Brain microvascular endothelial cell (primary cell): ENCODE measurements at regions of chr14 and their contacts with region 1.

Region 1: GRCh38 chr14:28751467-28752058 is 15.0 kb upstream of the FOXG1 start:
- DNase-seq: peak; percentile 24
- H3K4me3 ChIP-seq: no peak overlapping the region
- H3K27ac ChIP-seq: no peak overlapping the region
- H3K27me3 ChIP-seq: peaks cover 9% of the 10 kb centered on the region
- CTCF ChIP-seq: peak; percentile 86

Region 2: GRCh38 chr14:29126361-29126760 is 374.8 kb after region 1 on chr14:
- in situ Hi-C with region 1: no loop called
- DNase-seq: no peak
- H3K4me3 ChIP-seq: no peak overlapping the region
- H3K27ac ChIP-seq: no peak overlapping the region
- H3K27me3 ChIP-seq: no peaks in the 10 kb centered on the region
- CTCF ChIP-seq: no peak

Region 3: DNA sequence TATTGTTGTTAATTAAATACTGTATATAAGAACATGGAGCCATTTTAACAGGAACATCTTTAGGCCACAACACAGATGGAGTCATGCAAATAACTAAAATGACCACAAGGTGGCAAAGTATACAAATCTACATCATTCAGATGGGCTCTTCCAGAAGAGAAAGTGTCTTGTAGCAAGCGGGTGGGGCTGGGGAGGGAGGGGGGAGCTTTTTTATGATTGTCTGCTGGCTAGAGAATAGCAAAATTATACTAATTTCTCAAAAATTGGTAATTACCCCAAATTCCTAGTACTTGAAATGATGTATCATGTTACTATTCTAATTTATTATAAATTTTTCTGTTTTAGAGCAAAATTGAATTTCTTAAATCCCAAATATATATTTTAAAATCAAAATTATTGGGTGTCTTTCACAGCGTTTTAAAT is 797.4 kb after region 1 on chr14:
- in situ Hi-C with region 1: loop called (anchors 25 kb)
- DNase-seq: peak; percentile 27
- H3K4me3 ChIP-seq: no peak overlapping the region
- H3K27ac ChIP-seq: no peak overlapping the region
- H3K27me3 ChIP-seq: no peaks in the 10 kb centered on the region
- CTCF ChIP-seq: peak; percentile 53